Right cardiac atrium (tissue), 5 donors: ENCODE measurements at regions of chr20 and their contacts with region 1.

Region 1: GRCh38 chr20:32789896-32790750 is 27.9 kb downstream of the DNMT3B start:
- DNase-seq: peak; percentile 70 to 90 (median 89)
- ATAC-seq: peak; percentile 84 to 88
- H3K4me3 ChIP-seq: no peak overlapping the region
- H3K27ac ChIP-seq: no peak overlapping the region
- H3K4me1 ChIP-seq: no peaks in the 10 kb centered on the region
- H3K27me3 ChIP-seq: no peaks in the 10 kb centered on the region

Region 2: DNA sequence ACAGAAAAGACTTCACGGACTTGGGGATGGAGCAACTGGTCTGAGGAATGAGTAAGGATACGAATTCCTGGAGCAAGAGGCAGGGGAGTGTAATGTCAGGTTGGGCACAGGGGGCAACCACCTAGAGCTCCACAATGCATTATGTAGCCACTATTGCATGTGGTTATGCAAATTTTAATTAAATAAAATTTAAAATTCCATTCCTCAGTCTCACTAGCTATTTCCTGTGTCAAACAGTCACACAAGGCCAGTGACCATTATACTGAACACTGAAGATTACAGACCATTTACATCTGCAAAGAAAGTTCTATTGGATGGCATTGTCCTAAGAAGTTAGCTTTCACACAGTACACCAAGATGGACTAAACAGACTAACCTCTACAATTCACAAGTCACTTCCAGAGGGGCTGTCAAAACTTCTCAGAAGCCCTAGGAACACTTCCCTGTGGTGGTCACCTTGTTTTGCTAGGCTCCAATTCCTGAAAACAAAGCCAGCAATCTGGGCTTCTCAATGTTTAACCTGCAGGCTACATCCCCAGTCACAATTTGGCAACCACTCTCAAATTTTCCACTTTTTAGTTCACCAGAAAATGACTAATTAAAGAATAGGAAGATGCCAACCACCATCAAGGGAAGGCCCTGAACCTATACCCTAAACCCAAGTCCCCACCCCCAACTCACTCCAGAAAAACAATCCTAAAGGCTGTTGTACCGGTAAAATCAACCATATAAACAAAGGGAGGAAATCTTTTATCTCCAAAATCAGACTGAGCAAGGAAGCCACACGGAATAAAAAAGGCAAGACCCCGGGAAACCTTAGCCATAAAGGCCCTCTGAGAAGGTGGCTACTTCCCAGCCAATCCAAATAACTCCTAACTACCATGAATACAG is 82.2 kb before region 1 on chr20:
- intact Hi-C with region 1: no loop called
- DNase-seq: no peak
- ATAC-seq: peak in 1 of 2 donors; percentile 74
- H3K4me3 ChIP-seq: no peak overlapping the region
- H3K27ac ChIP-seq: peak overlapping the region; percentile 30
- H3K4me1 ChIP-seq: peaks cover 8% of the 10 kb centered on the region
- H3K27me3 ChIP-seq: no peaks in the 10 kb centered on the region

Region 3: DNA sequence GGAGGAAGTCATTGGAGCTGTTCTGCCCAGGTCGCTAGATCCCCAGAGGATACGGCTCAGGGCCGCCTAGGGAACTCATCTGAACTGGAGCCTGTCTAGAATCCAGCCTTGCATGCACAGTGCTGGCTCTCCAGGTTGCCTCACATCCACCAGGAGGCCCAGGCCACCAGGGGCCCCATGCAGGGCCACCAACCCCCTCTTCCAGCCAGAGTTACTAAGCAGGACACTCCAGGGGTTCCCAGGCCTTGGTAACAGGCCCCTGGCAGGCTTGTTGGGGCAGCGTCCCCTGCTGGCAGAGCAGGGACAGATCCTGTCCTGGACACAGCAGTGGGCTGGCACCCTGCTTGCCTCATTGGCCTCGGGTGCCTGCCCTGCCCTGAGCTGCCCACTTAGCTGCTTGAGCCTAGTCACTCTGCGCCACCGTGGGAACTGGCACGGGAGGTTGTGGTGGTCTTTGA is 103.9 kb after region 1 on chr20:
- intact Hi-C with region 1: loop called in 1 of 4 experiments (anchors 5 kb)
- DNase-seq: peak in 1 of 3 donors; percentile 56
- ATAC-seq: peak in 1 of 2 donors; percentile 25
- H3K4me3 ChIP-seq: no peak overlapping the region
- H3K27ac ChIP-seq: no peak overlapping the region
- H3K4me1 ChIP-seq: no peaks in the 10 kb centered on the region
- H3K27me3 ChIP-seq: no peaks in the 10 kb centered on the region

Region 4: DNA sequence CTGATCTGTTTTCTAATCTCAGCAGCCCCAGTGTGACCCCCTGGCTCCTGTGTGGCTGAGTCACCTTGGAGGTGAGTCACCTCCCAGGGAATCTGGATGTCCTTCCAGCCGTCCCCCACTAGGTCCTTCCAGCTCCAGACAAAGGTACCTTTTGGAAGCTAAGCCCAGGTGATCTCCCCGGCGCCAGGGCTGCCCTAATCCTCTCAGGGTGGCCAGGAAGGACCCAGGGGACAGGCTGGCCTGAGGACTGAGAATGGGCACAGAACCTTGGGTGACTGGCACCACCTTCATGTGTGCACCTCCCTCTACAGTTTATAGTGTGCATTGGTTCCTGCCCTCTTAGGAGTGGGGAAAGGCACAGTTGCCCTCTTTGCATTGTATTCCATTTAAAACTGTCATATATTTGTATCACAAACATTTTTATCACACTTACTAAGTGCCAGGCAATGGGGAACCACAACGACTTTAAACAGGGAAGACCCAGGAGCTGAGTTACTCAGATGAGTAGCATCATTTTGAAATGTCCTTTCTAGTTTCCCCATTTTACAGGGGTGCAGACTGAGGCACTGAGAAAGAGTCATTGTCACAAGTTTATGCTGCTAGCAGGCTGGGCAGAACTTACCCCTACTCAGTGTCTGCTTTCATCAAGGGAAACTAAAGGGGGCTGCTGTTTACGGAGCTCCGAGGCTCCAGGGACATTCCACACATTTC is 286.7 kb after region 1 on chr20:
- intact Hi-C with region 1: loop called in 1 of 4 experiments (anchors 10 kb)
- DNase-seq: no peak
- ATAC-seq: no peak
- H3K4me3 ChIP-seq: no peak overlapping the region
- H3K27ac ChIP-seq: no peak overlapping the region
- H3K4me1 ChIP-seq: no peaks in the 10 kb centered on the region
- H3K27me3 ChIP-seq: no peaks in the 10 kb centered on the region

Region 5: GRCh38 chr20:33097001-33097400 is 306.9 kb after region 1 on chr20:
- intact Hi-C with region 1: loop called in 1 of 4 experiments (anchors 10 kb)
- DNase-seq: peak; percentile 58 to 92 (median 79)
- ATAC-seq: peak in 1 of 2 donors; percentile 73
- H3K4me3 ChIP-seq: no peak overlapping the region
- H3K27ac ChIP-seq: no peak overlapping the region
- H3K4me1 ChIP-seq: no peaks in the 10 kb centered on the region
- H3K27me3 ChIP-seq: no peaks in the 10 kb centered on the region

Region 6: DNA sequence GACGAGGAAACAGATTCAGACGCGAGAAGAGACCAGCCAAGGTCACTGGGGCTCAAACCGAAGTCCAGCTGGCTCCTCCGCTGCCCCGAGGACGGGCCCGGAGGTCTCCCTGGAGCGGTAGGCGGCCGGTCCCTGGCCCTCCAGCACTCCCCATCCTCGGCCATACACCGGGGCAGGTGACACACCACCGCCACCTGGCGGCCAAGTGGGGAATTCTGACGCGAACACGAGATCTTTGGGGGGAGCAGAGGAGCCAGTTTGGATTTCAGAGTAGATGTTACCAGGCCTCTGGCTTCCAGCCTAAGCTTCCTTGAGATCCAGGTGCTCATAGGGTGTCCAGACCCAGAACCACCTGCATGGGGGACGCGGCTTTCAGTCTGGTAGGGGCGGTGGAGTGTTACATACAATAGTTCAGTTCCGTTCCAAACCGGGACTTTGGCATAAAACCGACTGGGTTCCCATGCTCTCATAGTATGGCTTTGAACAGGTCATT is 509.0 kb after region 1 on chr20:
- intact Hi-C with region 1: loop called in 2 of 4 experiments (anchors 10 kb)
- DNase-seq: peak; percentile 66 to 86 (median 86)
- ATAC-seq: peak; percentile 68 to 82
- H3K4me3 ChIP-seq: no peak overlapping the region
- H3K27ac ChIP-seq: no peak overlapping the region
- H3K4me1 ChIP-seq: no peaks in the 10 kb centered on the region
- H3K27me3 ChIP-seq: no peaks in the 10 kb centered on the region